Naive thymus-derived CD8-positive, alpha-beta T cell (primary cell): ENCODE measurements at regions of chr18 and their contacts with region 1.

Region 1: DNA sequence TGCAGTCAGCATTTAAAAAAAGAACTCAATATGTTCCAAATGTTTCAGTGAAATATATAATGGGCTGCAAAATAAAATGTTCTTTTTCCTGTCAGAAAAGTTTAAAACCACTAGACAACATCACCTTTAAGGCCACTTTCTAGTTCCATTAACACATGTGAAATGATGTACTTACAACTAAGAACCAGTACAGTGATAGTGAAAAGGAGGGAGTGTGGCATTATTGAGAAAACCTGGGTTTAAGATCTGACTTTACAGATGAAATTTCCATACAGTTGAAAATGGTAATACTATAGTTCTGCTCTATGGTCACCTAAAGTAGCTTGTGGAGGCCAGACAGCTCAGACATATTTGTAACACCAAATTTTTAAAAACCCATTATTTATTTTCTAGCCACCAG is 14.7 kb downstream of the MEX3C start:
- DNase-seq: no peak
- ATAC-seq: no peak
- H3K4me3 Mint-ChIP-seq: no peak overlapping the region
- H3K27ac Mint-ChIP-seq: peak overlapping the region in 2 of 10 donors; percentile 17 to 44
- H3K4me1 Mint-ChIP-seq: peaks cover 19 to 78% (median 62%) of the 10 kb centered on the region in 4 donors
- H3K27me3 Mint-ChIP-seq: no peaks in the 10 kb centered on the region

Region 2: GRCh38 chr18:51120809-51121596 is 61.8 kb before region 1 on chr18:
- POLR2A ChIA-PET with region 1: no interaction called
- DNase-seq: no peak
- ATAC-seq: no peak
- H3K4me3 Mint-ChIP-seq: no peak overlapping the region
- H3K27ac Mint-ChIP-seq: no peak overlapping the region
- H3K4me1 Mint-ChIP-seq: peaks cover 0 to 2% (median 0%) of the 10 kb centered on the region in 4 donors
- H3K27me3 Mint-ChIP-seq: peaks cover 0 to 9% (median 2%) of the 10 kb centered on the region in 5 donors

Region 3: GRCh38 chr18:51171223-51171622 is 11.6 kb before region 1 on chr18:
- POLR2A ChIA-PET with region 1: interaction called, 12 read pairs
- DNase-seq: no peak
- ATAC-seq: no peak
- H3K4me3 Mint-ChIP-seq: no peak overlapping the region
- H3K27ac Mint-ChIP-seq: peak overlapping the region in 3 of 10 donors; percentile 28 to 55 (median 31)
- H3K4me1 Mint-ChIP-seq: peaks cover 9 to 46% (median 17%) of the 10 kb centered on the region in 4 donors
- H3K27me3 Mint-ChIP-seq: no peaks in the 10 kb centered on the region

Region 4: GRCh38 chr18:51248685-51249084 is 65.9 kb after region 1 on chr18:
- POLR2A ChIA-PET with region 1: no interaction called
- DNase-seq: no peak
- ATAC-seq: no peak
- H3K4me3 Mint-ChIP-seq: no peak overlapping the region
- H3K27ac Mint-ChIP-seq: no peak overlapping the region
- H3K4me1 Mint-ChIP-seq: peaks cover 0 to 10% (median under 1%) of the 10 kb centered on the region in 4 donors
- H3K27me3 Mint-ChIP-seq: peaks cover 4 to 9% (median 7%) of the 10 kb centered on the region in 5 donors

Region 5: GRCh38 chr18:51287823-51288508 is 105.1 kb after region 1 on chr18:
- POLR2A ChIA-PET with region 1: no interaction called
- DNase-seq: no peak
- ATAC-seq: no peak
- H3K4me3 Mint-ChIP-seq: no peak overlapping the region
- H3K27ac Mint-ChIP-seq: no peak overlapping the region
- H3K4me1 Mint-ChIP-seq: no peaks in the 10 kb centered on the region
- H3K27me3 Mint-ChIP-seq: peaks cover 3 to 10% (median 7%) of the 10 kb centered on the region in 5 donors